AG04450 (cell line): ENCODE measurements at regions of chr2 and their contacts with region 1.

Region 1: GRCh38 chr2:160956243-160956802 is 203.9 kb upstream of the TANK start:
- DNase-seq: no peak
- H3K4me3 ChIP-seq: no peak overlapping the region
- H3K27ac ChIP-seq: no peak overlapping the region
- H3K27me3 ChIP-seq: no peaks in the 10 kb centered on the region
- CTCF ChIP-seq: no peak

Region 2: GRCh38 chr2:160445673-160446072 is 510.6 kb before region 1 on chr2:
- CTCF ChIA-PET with region 1: no interaction called
- POLR2A ChIA-PET with region 1: interaction called, 10 read pairs
- DNase-seq: no peak
- H3K4me3 ChIP-seq: no peak overlapping the region
- H3K27ac ChIP-seq: no peak overlapping the region
- H3K27me3 ChIP-seq: no peaks in the 10 kb centered on the region
- CTCF ChIP-seq: no peak

Region 3: GRCh38 chr2:160940699-160941098 is 15.6 kb before region 1 on chr2:
- CTCF ChIA-PET with region 1: no interaction called
- POLR2A ChIA-PET with region 1: no interaction called
- DNase-seq: no peak
- H3K4me3 ChIP-seq: no peak overlapping the region
- H3K27ac ChIP-seq: no peak overlapping the region
- H3K27me3 ChIP-seq: no peaks in the 10 kb centered on the region
- CTCF ChIP-seq: no peak